ENCODE measurements at regions of chr22 and their contacts with region 1.

Region 1: DNA sequence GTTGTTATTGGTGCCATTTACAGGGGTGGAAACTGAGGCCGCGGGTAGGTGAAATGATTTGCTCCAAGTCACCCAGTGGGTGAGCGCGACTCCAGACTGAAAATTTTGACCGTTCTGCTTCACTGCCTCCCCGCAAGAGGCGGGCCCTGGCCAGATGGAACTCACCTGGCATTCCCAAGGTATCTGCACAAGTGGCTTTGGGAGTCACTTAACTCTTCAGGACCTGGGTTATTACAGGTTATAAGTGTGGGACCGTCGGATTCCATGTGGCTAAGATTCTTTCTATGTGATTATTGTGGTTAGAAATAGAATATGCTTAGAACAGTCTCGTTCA is 598 bp downstream of the CABIN1 start:
- DNase-seq: no peak
- H3K4me3 ChIP-seq: peak overlapping the region; percentile 90
- H3K27ac ChIP-seq: peak overlapping the region; percentile 47
- H3K4me1 ChIP-seq: peaks cover 14% of the 10 kb centered on the region
- CTCF ChIP-seq: no peak

Region 2: DNA sequence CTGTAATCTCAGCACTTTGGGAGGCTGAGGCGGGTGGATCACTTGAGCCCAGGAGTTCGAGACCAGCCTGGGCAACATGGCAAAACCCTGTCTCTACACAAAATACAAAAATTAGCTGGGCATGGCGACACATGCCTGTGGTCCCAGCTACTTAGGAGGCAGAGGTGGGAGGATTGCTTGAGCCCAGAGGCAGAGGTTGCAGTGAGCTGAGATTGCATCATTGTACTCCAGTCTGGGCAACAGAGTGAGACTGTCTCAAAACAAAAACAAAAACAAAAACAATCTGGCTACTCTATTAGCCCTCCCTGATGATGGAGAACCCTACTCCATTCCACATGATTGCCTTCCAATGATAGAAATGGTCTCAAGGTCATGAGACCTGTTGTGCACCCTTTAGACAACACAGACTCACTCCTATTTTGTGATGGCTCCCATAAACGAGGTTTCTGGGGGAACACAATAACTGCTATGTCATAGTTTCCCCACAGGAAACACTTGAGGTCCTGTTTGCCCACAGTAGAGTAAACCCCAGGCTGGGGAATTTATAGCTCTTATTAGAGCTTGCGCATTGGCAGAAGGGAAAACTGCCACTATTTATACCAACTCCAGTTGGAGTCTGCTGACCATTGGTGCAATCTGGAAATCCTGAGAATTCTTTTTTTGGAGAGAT is 88.9 kb before region 1 on chr22:
- CTCF ChIA-PET with region 1: no interaction called
- POLR2A ChIA-PET with region 1: no interaction called
- intact Hi-C with region 1: no loop called
- DNase-seq: no peak
- H3K4me3 ChIP-seq: no peak overlapping the region
- H3K27ac ChIP-seq: no peak overlapping the region
- H3K4me1 ChIP-seq: peaks cover under 1% of the 10 kb centered on the region
- CTCF ChIP-seq: no peak

Region 3: GRCh38 chr22:24067587-24068376 is 56.1 kb after region 1 on chr22:
- CTCF ChIA-PET with region 1: no interaction called
- POLR2A ChIA-PET with region 1: interaction called, 4 read pairs
- intact Hi-C with region 1: loop called (anchors 5 kb)
- DNase-seq: peak; percentile 25
- H3K4me3 ChIP-seq: peak overlapping the region; percentile 11
- H3K27ac ChIP-seq: peak overlapping the region; percentile 81
- H3K4me1 ChIP-seq: peaks cover 53% of the 10 kb centered on the region
- CTCF ChIP-seq: no peak

Region 4: GRCh38 chr22:24112193-24112592 is 100.5 kb after region 1 on chr22:
- CTCF ChIA-PET with region 1: no interaction called
- POLR2A ChIA-PET with region 1: no interaction called
- intact Hi-C with region 1: no loop called
- DNase-seq: no peak
- H3K4me3 ChIP-seq: no peak overlapping the region
- H3K27ac ChIP-seq: no peak overlapping the region
- H3K4me1 ChIP-seq: no peaks in the 10 kb centered on the region
- CTCF ChIP-seq: no peak

Measured in OCI-LY7 (cell line).